SK-N-SH (cell line): ENCODE measurements at regions of chr17 and their contacts with region 1.

Region 1: DNA sequence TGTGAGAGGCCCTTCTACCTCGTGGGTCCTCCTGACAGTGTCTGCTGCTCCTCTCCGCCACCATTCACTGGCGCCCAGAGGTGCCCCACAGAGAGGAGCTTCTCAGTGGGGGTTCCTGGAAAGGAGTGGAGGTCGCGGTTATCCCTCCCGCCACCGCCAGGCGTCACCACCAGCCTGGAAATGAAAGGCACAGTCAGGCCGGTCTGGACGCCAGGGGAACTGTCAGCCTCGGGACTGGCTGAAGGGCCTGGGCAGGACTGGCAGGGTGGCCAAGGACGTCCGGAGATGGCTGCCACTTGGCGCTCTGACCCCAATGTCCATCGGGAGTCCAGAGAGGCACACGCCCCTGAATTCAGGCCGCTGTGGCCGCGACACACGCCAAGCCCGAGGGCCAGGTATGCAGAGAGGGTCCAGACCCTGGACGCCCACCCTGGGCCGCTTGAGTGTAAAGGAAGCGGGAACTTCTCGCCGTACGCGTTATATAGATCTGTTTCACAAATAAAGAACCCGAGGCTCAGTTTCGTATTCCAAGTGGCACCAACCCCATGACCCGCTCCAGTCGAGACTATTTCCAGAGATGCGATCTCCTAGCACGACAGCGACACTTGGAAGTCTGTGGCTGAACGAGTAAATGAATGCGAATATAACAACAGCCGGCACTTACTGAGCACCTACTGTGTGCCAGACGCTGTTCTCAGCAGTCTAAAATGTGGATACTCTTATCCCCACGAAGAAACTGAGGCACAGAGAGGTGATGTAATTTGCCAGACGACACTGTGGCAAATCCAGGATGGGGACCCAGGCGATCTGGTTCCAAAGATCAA is 7.6 kb upstream of the NXPH3 start:
- DNase-seq: peak; percentile 92
- H3K4me3 ChIP-seq: peak overlapping the region; percentile 40 to 56
- H3K27ac ChIP-seq: no peak overlapping the region
- H3K4me1 ChIP-seq: peaks cover 0 to 14% of the 10 kb centered on the region in 2 experiments; a peak in 1 of 4 replicates
- H3K27me3 ChIP-seq: peaks cover 61% of the 10 kb centered on the region
- CTCF ChIP-seq: peak; percentile 99
- EP300 ChIP-seq: no peak
- RAD21 ChIP-seq: peak; percentile 99

Region 2: DNA sequence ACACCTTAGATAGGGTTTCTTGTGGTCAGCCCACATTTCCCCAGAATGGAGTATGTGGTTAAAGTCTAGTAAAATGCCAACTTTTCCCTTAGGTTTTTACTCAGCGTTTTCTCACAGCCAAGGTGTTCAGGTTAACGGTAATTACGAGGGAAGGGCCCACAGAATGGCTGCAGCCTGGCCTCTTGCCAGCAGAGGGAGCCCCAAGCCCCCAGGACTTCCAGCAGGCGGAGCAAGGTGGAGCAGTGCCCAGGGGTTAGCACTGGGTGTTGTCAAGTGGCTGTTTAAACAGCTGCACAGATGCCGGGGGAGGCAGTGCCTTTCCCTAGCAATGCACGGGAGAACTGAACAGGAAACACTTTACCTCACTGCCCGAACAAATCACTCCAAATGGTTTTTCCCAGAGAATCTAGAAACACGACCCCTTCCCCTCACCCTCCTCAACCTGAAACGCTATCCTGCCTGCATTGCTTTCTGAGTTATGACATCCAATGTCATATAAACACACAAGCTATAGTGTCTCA is 160.0 kb before region 1 on chr17:
- CTCF ChIA-PET with region 1: interaction called, 40 read pairs
- POLR2A ChIA-PET with region 1: no interaction called
- DNase-seq: peak; percentile 92
- H3K4me3 ChIP-seq: peak overlapping the region in 1 of 2 experiments; percentile 27; a peak in 1 of 4 replicates
- H3K27ac ChIP-seq: no peak overlapping the region
- H3K4me1 ChIP-seq: peaks cover 0 to 4% of the 10 kb centered on the region in 2 experiments; a peak in 1 of 4 replicates
- H3K27me3 ChIP-seq: no peaks in the 10 kb centered on the region
- CTCF ChIP-seq: peak; percentile 100
- EP300 ChIP-seq: no peak
- RAD21 ChIP-seq: peak; percentile 86

Region 3: DNA sequence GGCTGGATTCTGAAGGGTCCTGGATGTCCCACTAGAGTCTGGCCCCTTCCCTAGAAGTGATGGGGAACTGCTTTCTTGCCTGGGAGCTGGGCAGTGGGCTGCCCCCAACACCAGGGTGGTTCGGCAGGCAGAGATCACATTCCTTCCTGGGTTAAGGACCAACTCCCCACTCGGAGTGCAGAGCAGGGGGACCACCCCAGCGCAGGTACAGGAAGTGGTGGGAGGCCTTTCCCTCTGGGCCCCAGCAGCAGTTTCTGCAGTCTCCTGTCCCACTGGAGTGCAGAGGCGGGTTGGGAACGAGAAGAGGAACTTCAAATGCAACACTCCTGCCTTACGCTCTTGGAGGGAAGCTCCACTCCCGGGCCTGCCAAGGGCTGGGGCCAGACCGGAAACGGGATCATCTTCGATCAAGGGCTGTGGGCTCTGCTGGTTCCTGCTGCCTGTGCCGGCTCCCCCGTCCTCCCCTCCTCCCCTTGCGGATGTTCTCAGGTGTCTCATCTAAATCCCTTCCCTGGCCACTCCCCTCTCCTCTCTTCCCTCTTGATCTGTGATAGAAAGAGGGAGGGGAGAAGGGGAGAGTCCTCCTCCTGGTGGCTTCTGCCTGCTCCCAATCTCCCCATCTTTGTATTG is 82.0 kb before region 1 on chr17:
- CTCF ChIA-PET with region 1: interaction called, 10 read pairs
- POLR2A ChIA-PET with region 1: no interaction called
- DNase-seq: no peak
- H3K4me3 ChIP-seq: no peak overlapping the region
- H3K27ac ChIP-seq: no peak overlapping the region
- H3K4me1 ChIP-seq: peaks cover 0 to 28% of the 10 kb centered on the region in 2 experiments; a peak in 1 of 4 replicates
- H3K27me3 ChIP-seq: peaks cover 76% of the 10 kb centered on the region
- CTCF ChIP-seq: no peak
- EP300 ChIP-seq: no peak
- RAD21 ChIP-seq: no peak

Region 4: DNA sequence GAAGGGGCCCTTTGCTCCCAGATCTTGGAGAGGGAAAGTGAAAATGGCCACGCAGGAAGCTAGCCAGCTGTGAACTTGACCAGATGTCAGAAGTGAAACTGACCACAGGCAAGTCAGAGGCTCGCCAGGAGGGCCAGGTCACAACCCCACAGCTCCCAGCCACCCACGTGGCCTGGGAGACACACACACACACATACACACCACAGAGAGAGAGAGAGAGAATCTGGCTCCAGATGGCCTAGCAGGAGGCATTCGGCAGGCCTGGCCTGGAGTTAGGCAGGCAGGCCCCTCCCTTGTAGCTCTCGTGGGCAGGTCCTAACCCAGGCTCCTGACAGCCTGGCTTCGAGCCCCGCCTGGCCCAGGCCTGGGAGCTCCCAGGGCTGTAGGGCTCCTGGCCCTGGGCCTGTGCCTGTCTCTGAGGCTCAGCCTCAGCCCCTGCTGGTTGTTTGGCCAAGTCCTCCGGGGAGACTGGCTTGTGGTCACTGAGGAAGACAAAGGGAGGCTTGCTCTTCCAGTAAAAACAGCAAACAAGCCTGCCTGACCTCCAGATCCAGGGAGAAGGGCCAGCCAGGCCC is 52.8 kb before region 1 on chr17:
- CTCF ChIA-PET with region 1: interaction called, 11 read pairs
- POLR2A ChIA-PET with region 1: no interaction called
- DNase-seq: peak; percentile 97
- H3K4me3 ChIP-seq: no peak overlapping the region
- H3K27ac ChIP-seq: peak overlapping the region; percentile 15 to 99; a peak in 3 of 4 replicates
- H3K4me1 ChIP-seq: peaks cover 7 to 76% of the 10 kb centered on the region in 2 experiments
- H3K27me3 ChIP-seq: peaks cover 2% of the 10 kb centered on the region; the same call in 1 of the 2 replicates
- CTCF ChIP-seq: no peak
- EP300 ChIP-seq: peak in 1 of 2 experiments; percentile 94; a peak in 2 of 4 replicates
- RAD21 ChIP-seq: peak; percentile 46; the same call in 1 of the 2 replicates

Region 5: DNA sequence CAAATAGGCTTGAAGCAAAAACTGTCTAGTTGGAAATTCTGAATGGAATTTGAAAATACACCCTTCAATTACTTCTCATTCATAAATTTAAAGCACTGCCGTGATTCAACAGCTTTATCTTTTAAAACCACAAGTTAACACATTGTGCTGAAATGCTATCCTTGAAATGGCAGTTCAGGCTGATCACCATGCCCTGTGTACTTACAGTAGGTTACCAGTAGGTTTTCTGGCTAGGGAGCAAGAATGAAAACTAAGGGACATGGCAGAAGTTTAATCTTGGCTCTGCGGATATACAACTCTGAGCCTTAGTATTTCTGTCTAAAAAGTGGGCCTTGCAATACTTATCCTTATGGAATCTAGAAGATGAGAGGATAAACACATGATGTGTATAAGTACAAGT is 35.6 kb after region 1 on chr17:
- CTCF ChIA-PET with region 1: interaction called, 22 read pairs
- POLR2A ChIA-PET with region 1: no interaction called
- DNase-seq: no peak
- H3K4me3 ChIP-seq: no peak overlapping the region
- H3K27ac ChIP-seq: no peak overlapping the region
- H3K4me1 ChIP-seq: no peaks in the 10 kb centered on the region
- H3K27me3 ChIP-seq: no peaks in the 10 kb centered on the region
- CTCF ChIP-seq: peak; percentile 32; the same call in 1 of the 2 replicates
- EP300 ChIP-seq: no peak
- RAD21 ChIP-seq: no peak

Region 6: GRCh38 chr17:49753959-49754391 is 185.9 kb after region 1 on chr17:
- CTCF ChIA-PET with region 1: interaction called, 19 read pairs
- POLR2A ChIA-PET with region 1: no interaction called
- DNase-seq: peak; percentile 56
- H3K4me3 ChIP-seq: no peak overlapping the region
- H3K27ac ChIP-seq: no peak overlapping the region
- H3K4me1 ChIP-seq: no peaks in the 10 kb centered on the region; a peak in 1 of 4 replicates
- H3K27me3 ChIP-seq: no peaks in the 10 kb centered on the region
- CTCF ChIP-seq: no peak
- EP300 ChIP-seq: no peak
- RAD21 ChIP-seq: no peak

Region 7: GRCh38 chr17:49851387-49852291 is 283.6 kb after region 1 on chr17:
- CTCF ChIA-PET with region 1: interaction called, 17 read pairs
- POLR2A ChIA-PET with region 1: no interaction called
- DNase-seq: peak; percentile 92
- H3K4me3 ChIP-seq: peak overlapping the region; percentile 59 to 66
- H3K27ac ChIP-seq: no peak overlapping the region
- H3K4me1 ChIP-seq: peaks cover 4 to 14% of the 10 kb centered on the region in 2 experiments; a peak in 1 of 4 replicates
- H3K27me3 ChIP-seq: peaks cover 10% of the 10 kb centered on the region; the same call in 1 of the 2 replicates
- CTCF ChIP-seq: peak; percentile 90
- EP300 ChIP-seq: no peak
- RAD21 ChIP-seq: peak; percentile 71